ENCODE measurements at regions of chr11 and their contacts with region 1.

Region 1: DNA sequence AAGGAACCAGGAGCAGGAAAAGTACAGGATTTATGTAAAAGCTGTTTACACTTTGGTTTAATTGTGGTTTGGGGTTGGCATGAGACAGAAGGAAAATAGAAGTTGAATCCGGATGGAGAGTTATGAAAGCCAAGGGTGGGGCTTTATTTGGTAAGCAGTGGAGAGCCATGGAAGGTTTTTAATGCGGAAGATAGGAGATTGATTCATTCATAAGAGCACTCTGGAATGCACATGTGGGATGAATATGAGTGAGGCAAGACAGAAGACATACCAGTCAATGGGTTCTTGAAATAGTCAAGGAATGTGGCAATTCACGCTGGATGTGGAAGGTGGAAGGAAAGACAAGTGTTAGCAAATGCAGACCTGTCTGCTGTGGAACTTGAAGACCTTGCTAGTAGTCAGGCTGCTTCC is 9.3 kb upstream of the GLB1L3 start:
- DNase-seq: peak; percentile 97
- ATAC-seq: peak; percentile 90
- H3K4me3 ChIP-seq: peak overlapping the region; percentile 24; the same call in 1 of the 2 replicates
- H3K27ac ChIP-seq: peak overlapping the region; percentile 83
- H3K4me1 ChIP-seq: peaks cover 32% of the 10 kb centered on the region
- H3K27me3 ChIP-seq: no peaks in the 10 kb centered on the region
- CTCF ChIP-seq: no peak

Region 2: DNA sequence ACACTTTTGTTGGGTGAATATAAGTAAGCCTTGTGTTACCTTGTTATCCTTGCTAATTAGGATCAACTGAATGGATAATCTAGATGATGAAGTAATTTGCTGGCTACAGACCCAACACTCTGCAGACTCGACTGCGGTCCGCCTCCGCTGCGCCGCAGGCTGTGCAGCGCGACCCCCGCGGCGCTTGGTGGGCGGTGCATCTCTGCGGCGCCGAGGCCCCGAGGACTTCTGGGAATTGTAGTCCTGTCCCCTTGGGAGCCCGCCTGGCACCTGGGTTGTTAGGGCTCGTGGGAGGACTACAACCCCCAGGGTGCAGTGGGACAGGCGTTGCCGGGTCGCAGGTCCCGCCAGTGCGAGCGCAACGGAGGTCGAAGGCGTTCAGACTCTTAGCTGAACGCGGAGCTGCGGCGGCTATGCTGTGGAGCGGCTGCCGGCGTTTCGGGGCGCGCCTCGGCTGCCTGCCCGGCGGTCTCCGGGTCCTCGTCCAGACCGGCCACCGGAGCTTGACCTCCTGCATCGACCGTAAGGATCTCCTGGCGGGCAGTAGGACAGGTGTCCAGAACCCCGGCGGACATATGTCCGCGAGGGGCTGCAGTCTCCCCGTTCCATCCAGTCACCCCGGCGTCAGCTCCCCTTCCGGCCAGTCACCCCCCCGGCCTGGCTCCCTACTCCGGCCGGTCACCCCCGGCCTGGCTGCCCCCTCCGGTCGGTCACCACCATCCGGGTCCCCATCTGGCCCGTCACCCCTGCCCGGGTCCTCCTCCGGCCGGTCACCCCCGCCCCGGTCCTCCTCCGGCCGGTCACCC is 13.5 kb before region 1 on chr11 and contains the starts of genes ACAD8 and THYN1:
- CTCF ChIA-PET with region 1: no interaction called
- POLR2A ChIA-PET with region 1: no interaction called
- intact Hi-C with region 1: loop called (anchors 1 kb)
- DNase-seq: peak; percentile 98
- ATAC-seq: peak; percentile 99
- H3K4me3 ChIP-seq: peak within 1 kb of the TSS; percentile 82
- H3K27ac ChIP-seq: no peak within 1 kb of the TSS
- H3K4me1 ChIP-seq: peaks cover 17% of the 10 kb centered on the region; the same call in 1 of the 2 replicates
- H3K27me3 ChIP-seq: no peaks in the 10 kb centered on the region
- CTCF ChIP-seq: no peak
- total RNA-seq, gene ACAD8: 17.6 and 22.6 TPM in 2 replicates
- total RNA-seq, gene THYN1: 56.2 and 56.6 TPM in 2 replicates